Sigmoid colon (tissue), 7 donors: ENCODE measurements at regions of chr2 and their contacts with region 1.

Region 1: DNA sequence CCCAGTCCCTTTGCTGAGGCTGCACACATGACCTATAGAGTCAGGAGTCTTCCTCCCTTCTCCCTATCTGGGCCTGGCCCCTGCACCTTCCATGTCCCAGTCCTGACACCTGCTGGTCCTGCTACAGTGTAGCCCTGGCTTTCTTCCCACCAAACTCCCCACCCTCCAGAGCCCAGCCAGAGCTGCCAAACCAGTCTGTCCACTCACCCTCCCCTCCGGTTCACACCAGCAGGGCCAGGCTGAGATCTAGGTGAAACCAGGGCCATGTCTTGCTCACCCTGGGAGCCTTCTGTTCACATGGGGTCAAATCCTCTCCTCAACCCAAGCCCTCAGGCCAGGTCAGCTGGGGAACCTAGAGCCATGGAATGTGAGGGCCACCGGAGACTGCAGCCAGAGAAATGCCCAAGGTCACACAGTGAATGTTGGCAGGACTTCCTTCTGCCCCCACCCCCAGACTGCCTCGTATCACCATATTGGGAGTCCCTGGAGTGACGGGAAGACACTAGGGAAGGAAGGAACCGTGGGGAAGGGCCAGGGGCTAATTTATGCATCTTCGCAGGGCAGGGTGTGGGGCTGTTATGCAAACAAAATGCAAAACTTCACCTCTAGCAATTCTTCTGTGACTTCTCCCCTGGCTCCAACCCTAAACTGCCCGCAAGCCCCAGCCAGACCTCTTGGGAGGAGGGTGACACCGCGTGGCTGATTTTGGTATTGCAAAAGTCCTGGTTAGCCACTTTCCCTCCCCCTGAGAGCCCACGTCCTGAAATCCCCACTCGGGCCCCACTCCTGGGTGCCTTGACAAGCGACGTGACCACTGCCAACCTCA is 14.6 kb downstream of the TNS1 start:
- DNase-seq: peak; percentile 93
- H3K4me3 ChIP-seq: peak overlapping the region in 2 of 4 donors; percentile 11 to 17
- H3K27ac ChIP-seq: peak overlapping the region; percentile 67 to 81 (median 73)
- H3K4me1 ChIP-seq: peaks cover 0 to 25% (median 17%) of the 10 kb centered on the region in 4 donors
- H3K27me3 ChIP-seq: no peaks in the 10 kb centered on the region
- CTCF ChIP-seq: peak; percentile 84 to 96 (median 92)
- EP300 ChIP-seq: no peak
- POLR2A ChIP-seq: no peak

Region 2: DNA sequence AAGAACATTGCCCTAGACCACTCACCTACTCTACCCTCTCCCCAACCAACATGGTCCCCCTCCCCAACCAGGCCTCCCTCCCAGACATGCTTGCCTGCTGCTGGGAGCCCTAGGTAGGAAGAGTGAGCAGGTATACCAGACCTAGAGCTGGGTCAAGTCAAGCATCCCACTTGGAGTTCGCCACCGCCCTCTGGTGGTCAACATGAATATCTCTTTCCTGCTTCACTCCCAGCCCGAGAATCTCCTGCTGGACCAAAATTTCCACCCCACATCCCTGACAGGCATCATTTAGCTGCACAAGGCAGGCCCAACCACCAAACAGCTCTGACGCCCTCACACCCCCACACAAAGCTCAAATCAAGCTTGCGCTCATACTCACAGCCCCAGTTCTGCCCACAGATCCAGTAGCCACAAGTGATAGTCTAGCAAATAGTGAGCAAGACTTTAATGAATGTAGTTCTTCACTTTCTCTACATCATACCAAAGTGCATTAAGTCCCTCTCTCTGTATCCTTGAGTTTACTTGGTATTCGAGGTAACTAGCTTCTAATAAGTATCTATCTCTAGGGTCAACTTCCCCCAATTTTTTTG is 101.4 kb before region 1 on chr2:
- intact Hi-C with region 1: loop called (anchors 2 kb)
- DNase-seq: peak; percentile 92
- H3K4me3 ChIP-seq: no peak overlapping the region
- H3K27ac ChIP-seq: peak overlapping the region; percentile 94 to 98 (median 98)
- H3K4me1 ChIP-seq: peaks cover 0 to 82% (median 49%) of the 10 kb centered on the region in 4 donors
- H3K27me3 ChIP-seq: no peaks in the 10 kb centered on the region
- CTCF ChIP-seq: peak; percentile 80 to 88 (median 87)
- EP300 ChIP-seq: no peak
- POLR2A ChIP-seq: no peak

Region 3: GRCh38 chr2:218168635-218169462 is 180.6 kb after region 1 on chr2:
- intact Hi-C with region 1: no loop called
- DNase-seq: peak; percentile 75
- H3K4me3 ChIP-seq: no peak overlapping the region
- H3K27ac ChIP-seq: no peak overlapping the region
- H3K4me1 ChIP-seq: peaks cover 0 to 10% (median 0%) of the 10 kb centered on the region in 4 donors
- H3K27me3 ChIP-seq: no peaks in the 10 kb centered on the region
- CTCF ChIP-seq: peak; percentile 26 to 63 (median 34)
- EP300 ChIP-seq: no peak
- POLR2A ChIP-seq: no peak